Motor neuron (in vitro differentiated cells): ENCODE measurements at regions of chr2 and their contacts with region 1.

Region 1: GRCh38 chr2:55175254-55176025 is 56.7 kb downstream of the CLHC1 start:
- ATAC-seq: peak; percentile 83 to 96 (median 90)
- H3K4me3 ChIP-seq: no peak overlapping the region
- H3K27ac ChIP-seq: no peak overlapping the region
- H3K4me1 ChIP-seq: peaks cover 19 to 27% of the 10 kb centered on the region in 2 donors

Region 2: DNA sequence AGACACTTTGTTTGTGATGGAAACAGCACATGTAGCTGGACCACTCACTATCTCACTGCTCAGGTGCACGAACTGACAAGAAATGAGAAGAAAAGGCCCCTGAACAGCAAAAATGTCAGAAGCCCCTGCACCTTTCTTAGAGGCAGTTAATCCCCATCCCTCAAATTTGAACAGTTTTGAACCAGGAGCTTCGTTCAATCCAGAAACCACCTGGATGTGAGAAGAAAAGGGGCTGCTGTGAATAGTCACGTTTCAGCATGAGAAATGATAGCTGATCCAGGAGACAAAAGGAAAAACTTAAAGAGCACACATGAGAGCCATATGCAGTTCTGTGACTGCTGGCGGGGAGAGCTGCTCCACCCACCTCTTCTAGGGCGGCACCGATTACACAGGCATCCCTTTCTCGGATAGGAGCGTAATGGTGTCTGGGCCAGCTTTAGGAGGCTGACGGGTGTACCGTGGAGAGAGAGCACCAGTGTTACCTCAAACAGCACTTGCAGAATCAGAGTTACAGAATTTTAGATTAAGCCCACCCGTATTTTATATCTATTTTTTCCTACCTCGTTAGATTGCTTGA is 569.0 kb before region 1 on chr2:
- in situ Hi-C with region 1: no loop called
- ATAC-seq: peak; percentile 27 to 90 (median 50)
- H3K4me3 ChIP-seq: no peak overlapping the region
- H3K27ac ChIP-seq: no peak overlapping the region
- H3K4me1 ChIP-seq: peaks cover 3 to 23% of the 10 kb centered on the region in 2 donors

Region 3: GRCh38 chr2:54899576-54900200 is 275.8 kb before region 1 on chr2:
- in situ Hi-C with region 1: loop called in 1 of 9 experiments (anchors 25 kb)
- ATAC-seq: peak in 5 of 8 experiments; percentile 41 to 92 (median 41)
- H3K4me3 ChIP-seq: no peak overlapping the region
- H3K27ac ChIP-seq: no peak overlapping the region
- H3K4me1 ChIP-seq: no peaks in the 10 kb centered on the region